Left ventricle myocardium superior (tissue), 1 donor: ENCODE measurements at regions of chr5 and their contacts with region 1.

Region 1: GRCh38 chr5:88883059-88883835 is at the start of gene MEF2C:
- DNase-seq: peak; percentile 82
- ATAC-seq: peak; percentile 87
- total RNA-seq, gene MEF2C: 51.4 TPM

Region 2: GRCh38 chr5:88736494-88736893 is 146.8 kb before region 1 on chr5:
- intact Hi-C with region 1: loop called (anchors 5 kb)
- DNase-seq: no peak
- ATAC-seq: no peak

Region 3: DNA sequence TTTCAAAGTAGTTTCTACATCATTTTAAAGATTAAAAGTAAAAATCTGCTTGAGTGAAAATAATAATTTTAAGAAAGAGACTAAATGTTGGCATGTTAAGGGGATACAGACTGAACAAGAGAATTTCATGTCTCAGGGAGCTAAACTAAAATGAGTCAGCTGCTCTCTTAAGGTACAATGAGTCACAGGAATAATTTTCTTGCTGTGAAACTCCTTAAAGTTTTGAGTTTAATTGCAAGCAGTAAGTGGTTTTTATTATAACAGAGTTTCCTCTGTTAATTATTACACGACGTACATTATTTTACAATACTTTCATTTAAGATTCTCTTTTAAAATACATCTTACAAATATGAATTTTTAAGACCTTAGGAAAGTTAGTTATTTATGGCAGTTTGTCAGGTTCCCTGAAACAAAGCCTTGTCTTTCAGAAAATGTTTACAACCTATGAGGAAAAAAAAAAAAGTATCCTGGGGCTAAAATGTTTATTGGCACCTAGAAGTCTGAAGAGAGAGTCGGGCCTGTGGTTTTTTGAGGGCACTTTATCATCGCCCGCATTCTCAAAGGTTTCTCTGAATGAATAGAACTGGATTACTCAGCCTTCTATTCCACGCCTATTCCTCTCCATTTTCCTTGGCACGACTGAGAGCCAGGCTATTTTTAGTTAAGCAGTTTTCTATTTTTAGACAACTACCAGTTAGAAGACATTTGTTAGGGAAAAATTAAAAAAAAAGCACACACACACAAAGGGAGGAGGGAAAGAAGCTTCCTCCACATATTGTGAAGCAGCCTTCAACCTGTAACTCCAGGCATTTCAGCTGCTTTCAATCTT is 97.6 kb before region 1 on chr5:
- intact Hi-C with region 1: no loop called
- DNase-seq: no peak
- ATAC-seq: peak; percentile 94

Region 4: DNA sequence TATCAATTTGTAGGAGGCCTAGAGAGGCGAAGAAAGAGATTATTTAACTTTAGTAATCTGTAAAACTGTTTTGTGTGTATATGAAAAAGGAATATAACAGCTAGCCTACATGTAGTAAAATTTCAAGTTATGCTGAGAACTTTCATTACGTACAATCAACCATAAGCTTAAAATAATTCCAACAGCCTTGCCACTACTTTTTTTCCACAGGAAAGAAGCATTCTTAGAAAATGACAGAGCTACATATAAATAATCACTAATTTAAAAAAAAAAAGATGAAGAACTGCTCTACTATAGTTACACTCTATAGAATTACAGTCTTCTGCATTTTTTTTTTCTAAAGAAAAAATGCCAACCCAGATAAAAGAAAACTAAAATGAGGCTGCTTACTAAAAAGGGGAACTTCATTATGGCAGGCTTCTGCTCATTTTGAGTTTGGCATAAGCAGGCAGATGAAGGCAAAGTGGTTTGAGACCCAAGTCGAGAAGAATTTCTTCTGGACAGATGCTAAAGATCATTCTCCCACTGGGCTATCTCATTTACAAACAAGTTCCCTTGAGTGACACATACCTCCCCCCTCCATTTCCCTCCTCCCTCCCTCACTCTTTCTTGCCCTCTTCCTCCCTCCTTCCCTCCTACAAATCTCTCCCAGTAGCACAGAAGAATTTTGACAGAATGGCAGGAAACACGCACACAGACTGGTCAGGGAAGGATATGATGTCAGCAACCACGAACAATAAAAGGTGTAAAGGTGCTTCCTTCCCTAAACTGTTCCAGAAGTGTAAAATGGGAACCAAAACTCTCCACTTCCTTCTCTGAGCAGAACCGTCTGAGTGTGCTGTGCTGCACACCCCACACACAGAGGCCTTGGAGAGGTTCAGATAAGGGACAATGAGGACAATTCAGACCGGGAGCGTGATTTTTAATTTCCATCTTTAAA is 56.3 kb before region 1 on chr5:
- intact Hi-C with region 1: loop called (anchors 5 kb)
- DNase-seq: peak; percentile 39
- ATAC-seq: peak; percentile 83